SK-N-SH (cell line): ENCODE measurements at regions of chr15 and their contacts with region 1.

Region 1: DNA sequence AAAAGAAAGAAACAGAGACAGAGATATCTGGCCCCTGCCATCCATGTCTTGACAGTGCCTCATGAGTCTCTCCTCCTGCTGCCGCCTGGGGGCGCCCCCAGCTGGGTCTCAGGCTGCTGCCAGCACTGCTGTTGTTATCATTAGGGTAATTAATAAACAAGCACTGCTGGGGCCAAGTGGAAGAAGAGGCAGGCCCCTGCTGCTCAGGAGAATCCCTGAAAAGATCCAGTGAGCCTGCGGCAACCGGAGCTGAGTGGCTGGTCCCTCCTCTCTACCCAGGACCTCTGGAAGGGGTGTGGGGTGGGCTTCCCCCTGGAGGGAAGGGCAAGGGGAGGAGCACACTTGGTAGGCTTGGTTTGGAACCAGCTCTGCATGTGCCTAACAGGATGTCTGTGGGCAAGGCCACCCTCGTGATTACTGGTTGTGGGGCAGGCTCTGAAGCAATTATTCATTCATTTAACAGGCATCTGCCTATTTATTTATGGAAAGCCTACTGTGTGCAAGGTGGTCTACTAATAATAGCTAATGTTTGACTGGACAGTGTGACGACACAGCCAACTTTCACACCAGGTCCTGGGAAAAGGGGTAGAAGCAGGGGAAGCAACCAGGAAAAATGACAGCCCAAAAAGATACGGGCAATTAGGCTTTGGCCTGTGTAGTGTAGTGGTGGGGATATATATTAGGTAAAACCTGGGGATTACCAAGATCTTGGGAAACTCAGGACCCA is 1.2 kb upstream of the TYRO3 start:
- DNase-seq: peak; percentile 89
- H3K4me3 ChIP-seq: peak overlapping the region; percentile 58 to 60
- H3K27ac ChIP-seq: peak overlapping the region; percentile 30 to 45
- H3K4me1 ChIP-seq: peaks cover 4 to 21% of the 10 kb centered on the region in 2 experiments; a peak in 3 of 4 replicates
- H3K27me3 ChIP-seq: no peaks in the 10 kb centered on the region
- CTCF ChIP-seq: peak; percentile 99
- EP300 ChIP-seq: 0 out of 4 replicates have a peak, but pooled peaks of 1 of the 2 experiments have one; percentile 17
- RAD21 ChIP-seq: peak; percentile 84

Region 2: GRCh38 chr15:41230650-41231533 is 326.9 kb before region 1 on chr15 and contains the starts of genes CHP1 and EXD1:
- CTCF ChIA-PET with region 1: no interaction called
- POLR2A ChIA-PET with region 1: no interaction called
- DNase-seq: peak; percentile 97
- H3K4me3 ChIP-seq: peak within 1 kb of the TSS; percentile 82 to 89
- H3K27ac ChIP-seq: peak within 1 kb of the TSS; percentile 81 to 89
- H3K4me1 ChIP-seq: peaks cover 0 to 8% of the 10 kb centered on the region in 2 experiments; a peak in 2 of 4 replicates
- H3K27me3 ChIP-seq: no peaks in the 10 kb centered on the region
- CTCF ChIP-seq: peak; percentile 94
- EP300 ChIP-seq: no peak
- RAD21 ChIP-seq: peak; percentile 14; the same call in 1 of the 2 replicates
- polyA plus RNA-seq, gene CHP1: 30.5 and 35.8 TPM in 2 replicates
- polyA plus RNA-seq, gene EXD1: 0.02 and 0.07 TPM in 2 replicates

Region 3: DNA sequence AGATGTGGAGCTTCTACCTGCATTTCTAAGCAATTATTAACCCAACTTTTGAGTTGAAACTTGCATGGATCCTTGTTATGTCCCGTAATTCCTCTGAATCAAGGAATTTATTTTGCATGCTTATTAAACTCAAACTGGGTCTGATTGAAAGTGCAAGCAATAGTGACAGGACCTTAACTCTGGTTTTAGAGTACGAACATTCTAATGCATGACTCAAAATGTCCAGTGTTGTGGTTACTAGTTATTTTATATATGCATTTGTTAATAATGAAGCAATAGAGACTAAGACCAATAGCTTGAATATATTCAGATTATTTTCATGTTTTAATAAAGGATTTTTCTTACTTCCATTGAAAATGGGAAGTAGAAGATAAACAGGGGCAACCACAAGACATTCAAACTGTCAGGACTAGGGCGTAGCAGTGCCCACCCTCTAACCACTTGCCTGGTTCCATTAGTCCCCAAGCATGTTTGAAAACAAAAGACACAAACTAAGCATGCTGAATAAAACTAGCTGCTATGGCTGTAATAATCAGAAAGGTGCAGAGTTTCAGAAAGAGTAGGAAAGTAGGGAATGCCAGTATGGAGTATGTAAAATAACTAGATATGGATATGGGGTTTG is 253.6 kb before region 1 on chr15:
- CTCF ChIA-PET with region 1: no interaction called
- POLR2A ChIA-PET with region 1: no interaction called
- DNase-seq: no peak
- H3K4me3 ChIP-seq: no peak overlapping the region
- H3K27ac ChIP-seq: no peak overlapping the region
- H3K4me1 ChIP-seq: no peaks in the 10 kb centered on the region
- H3K27me3 ChIP-seq: no peaks in the 10 kb centered on the region
- CTCF ChIP-seq: no peak
- EP300 ChIP-seq: no peak
- RAD21 ChIP-seq: no peak

Region 4: GRCh38 chr15:41501191-41501917 is 56.5 kb before region 1 on chr15:
- CTCF ChIA-PET with region 1: no interaction called
- POLR2A ChIA-PET with region 1: no interaction called
- DNase-seq: peak; percentile 75
- H3K4me3 ChIP-seq: no peak overlapping the region; a peak in 1 of 4 replicates
- H3K27ac ChIP-seq: no peak overlapping the region
- H3K4me1 ChIP-seq: peaks cover 0 to 8% of the 10 kb centered on the region in 2 experiments; a peak in 1 of 4 replicates
- H3K27me3 ChIP-seq: no peaks in the 10 kb centered on the region; the same call in 1 of the 2 replicates
- CTCF ChIP-seq: no peak
- EP300 ChIP-seq: no peak
- RAD21 ChIP-seq: no peak

Region 5: DNA sequence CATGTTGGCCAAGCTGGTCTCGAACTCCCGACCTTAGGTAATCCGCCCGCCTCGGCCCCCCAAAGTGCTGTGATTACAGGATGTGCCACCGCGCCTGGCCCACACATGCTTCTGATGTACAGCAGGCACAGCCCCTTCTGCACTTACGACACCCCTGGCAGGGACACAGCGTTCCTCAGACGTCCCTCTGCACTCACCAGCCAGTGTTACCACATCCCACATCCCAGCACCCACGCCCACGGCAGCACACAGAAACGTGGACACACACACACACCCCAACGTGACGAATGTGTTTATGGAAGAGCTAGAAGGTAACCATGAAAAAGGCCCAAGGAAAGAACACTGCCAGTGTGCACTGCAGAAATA is 13.2 kb before region 1 on chr15:
- CTCF ChIA-PET with region 1: interaction called, 11 read pairs
- POLR2A ChIA-PET with region 1: interaction called, 16 read pairs
- DNase-seq: peak; percentile 54
- H3K4me3 ChIP-seq: peak overlapping the region; percentile 75 to 76; a peak in 3 of 4 replicates
- H3K27ac ChIP-seq: no peak overlapping the region
- H3K4me1 ChIP-seq: peaks cover 4% of the 10 kb centered on the region in 2 experiments; a peak in 1 of 4 replicates
- H3K27me3 ChIP-seq: no peaks in the 10 kb centered on the region
- CTCF ChIP-seq: no peak
- EP300 ChIP-seq: no peak
- RAD21 ChIP-seq: no peak

Region 6: GRCh38 chr15:41568350-41569017 is 10.6 kb after region 1 on chr15:
- CTCF ChIA-PET with region 1: interaction called, 11 read pairs
- POLR2A ChIA-PET with region 1: no interaction called
- DNase-seq: no peak
- H3K4me3 ChIP-seq: no peak overlapping the region
- H3K27ac ChIP-seq: no peak overlapping the region
- H3K4me1 ChIP-seq: peaks cover 0 to 14% of the 10 kb centered on the region in 2 experiments; a peak in 1 of 4 replicates
- H3K27me3 ChIP-seq: no peaks in the 10 kb centered on the region
- CTCF ChIP-seq: no peak
- EP300 ChIP-seq: no peak
- RAD21 ChIP-seq: no peak

Region 7: DNA sequence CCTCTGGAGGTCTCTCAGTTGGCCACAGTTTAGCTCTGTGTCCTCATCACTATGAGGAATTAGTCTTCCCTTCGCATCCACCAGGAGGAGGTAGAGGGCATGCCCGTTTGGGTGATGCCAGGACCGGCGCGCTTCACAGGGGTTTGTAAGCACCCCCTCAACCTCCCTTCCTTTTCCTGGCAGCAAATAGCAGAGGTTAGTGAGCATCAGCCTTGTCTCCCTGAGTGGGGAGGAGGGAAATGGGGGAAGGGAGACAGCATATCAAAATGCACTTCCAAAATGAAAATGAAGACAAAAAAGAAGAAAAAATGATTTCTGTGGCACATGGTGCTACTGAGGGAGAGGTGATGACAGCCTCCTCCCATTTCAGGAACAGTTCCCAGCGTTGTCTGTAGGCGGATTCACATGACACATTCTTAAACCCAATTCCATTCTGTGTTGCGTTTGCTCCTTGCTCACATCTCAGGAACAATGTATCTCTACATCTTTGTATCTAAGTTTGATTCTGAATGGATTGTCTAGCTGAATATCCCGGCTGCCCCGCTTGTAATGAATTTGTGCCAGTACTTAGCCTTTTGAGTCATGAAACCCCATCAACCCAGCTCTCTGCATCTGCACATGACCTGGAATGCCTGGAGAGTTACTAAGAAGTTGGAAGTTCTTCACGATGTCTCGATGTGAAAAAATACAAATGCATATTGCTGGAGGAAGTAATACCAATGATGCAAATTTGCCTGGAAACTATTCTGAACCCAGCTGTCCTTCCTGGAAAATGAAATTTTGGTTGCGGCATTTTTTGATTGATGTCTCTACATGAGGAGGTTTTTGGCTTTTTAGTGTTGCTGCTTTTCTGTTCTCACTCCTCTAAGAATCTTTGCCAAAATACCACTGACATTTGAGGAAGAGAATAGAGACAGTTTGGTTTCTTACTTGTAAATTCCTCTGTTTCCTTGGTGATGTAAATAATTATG is 46.4 kb after region 1 on chr15:
- CTCF ChIA-PET with region 1: interaction called, 20 read pairs
- POLR2A ChIA-PET with region 1: no interaction called
- DNase-seq: peak; percentile 84
- H3K4me3 ChIP-seq: peak overlapping the region; percentile 31 to 51
- H3K27ac ChIP-seq: peak overlapping the region in 1 of 2 experiments; percentile 64; a peak in 2 of 4 replicates
- H3K4me1 ChIP-seq: peaks cover 3 to 5% of the 10 kb centered on the region in 2 experiments; a peak in 3 of 4 replicates
- H3K27me3 ChIP-seq: no peaks in the 10 kb centered on the region
- CTCF ChIP-seq: peak; percentile 85
- EP300 ChIP-seq: no peak
- RAD21 ChIP-seq: peak; percentile 74

Region 8: DNA sequence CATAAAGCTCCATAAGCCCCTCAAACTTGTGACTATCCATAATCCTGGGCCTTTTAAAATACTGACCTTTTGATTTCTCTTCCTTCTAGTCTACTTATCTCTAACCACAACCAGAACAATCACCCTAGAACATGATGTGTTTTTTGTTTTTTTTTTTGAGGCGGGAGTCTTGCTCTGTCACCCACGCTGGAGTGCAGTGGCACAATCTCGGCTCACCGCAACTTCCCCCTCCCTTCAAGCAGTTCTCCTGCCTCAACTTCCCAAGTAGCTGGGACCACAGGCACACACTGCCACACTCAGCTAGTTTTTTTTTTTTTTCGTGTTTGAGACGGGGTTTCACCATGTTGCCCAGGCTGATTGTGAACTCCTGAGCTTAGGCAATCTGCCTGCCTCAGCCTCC is 625.1 kb after region 1 on chr15:
- CTCF ChIA-PET with region 1: no interaction called
- POLR2A ChIA-PET with region 1: no interaction called
- DNase-seq: no peak
- H3K4me3 ChIP-seq: no peak overlapping the region
- H3K27ac ChIP-seq: no peak overlapping the region
- H3K4me1 ChIP-seq: no peaks in the 10 kb centered on the region
- H3K27me3 ChIP-seq: no peaks in the 10 kb centered on the region
- CTCF ChIP-seq: no peak
- EP300 ChIP-seq: no peak
- RAD21 ChIP-seq: no peak